ENCODE measurements at regions of chr14 and their contacts with region 1.

Region 1: GRCh38 chr14:34043627-34044372 is 92.9 kb upstream of the EGLN3 start:
- DNase-seq: peak; percentile 91
- ATAC-seq: peak; percentile 93
- H3K4me3 Mint-ChIP-seq: peak overlapping the region; percentile 73
- H3K27ac Mint-ChIP-seq: peak overlapping the region; percentile 91
- H3K4me1 Mint-ChIP-seq: peaks cover 58% of the 10 kb centered on the region
- H3K27me3 Mint-ChIP-seq: peaks cover 7% of the 10 kb centered on the region

Region 2: GRCh38 chr14:33959692-33960151 is 84.1 kb before region 1 on chr14:
- POLR2A ChIA-PET with region 1: no interaction called
- DNase-seq: no peak
- ATAC-seq: no peak
- H3K4me3 Mint-ChIP-seq: no peak overlapping the region
- H3K27ac Mint-ChIP-seq: no peak overlapping the region
- H3K4me1 Mint-ChIP-seq: peaks cover 16% of the 10 kb centered on the region
- H3K27me3 Mint-ChIP-seq: peaks cover 42% of the 10 kb centered on the region

Region 3: GRCh38 chr14:34018564-34019244 is 25.1 kb before region 1 on chr14:
- POLR2A ChIA-PET with region 1: interaction called, 12 read pairs
- DNase-seq: no peak
- ATAC-seq: peak; percentile 62
- H3K4me3 Mint-ChIP-seq: peak overlapping the region; percentile 79
- H3K27ac Mint-ChIP-seq: peak overlapping the region; percentile 93
- H3K4me1 Mint-ChIP-seq: peaks cover 31% of the 10 kb centered on the region
- H3K27me3 Mint-ChIP-seq: peaks cover 7% of the 10 kb centered on the region

Region 4: GRCh38 chr14:34059855-34060638 is 16.2 kb after region 1 on chr14:
- POLR2A ChIA-PET with region 1: interaction called, 18 read pairs
- DNase-seq: peak; percentile 82
- ATAC-seq: peak; percentile 96
- H3K4me3 Mint-ChIP-seq: peak overlapping the region; percentile 81
- H3K27ac Mint-ChIP-seq: peak overlapping the region; percentile 85
- H3K4me1 Mint-ChIP-seq: peaks cover 25% of the 10 kb centered on the region
- H3K27me3 Mint-ChIP-seq: peaks cover 46% of the 10 kb centered on the region